Psoas muscle (tissue), 8 donors: ENCODE measurements at regions of chr7 and their contacts with region 1.

Region 1: GRCh38 chr7:1532483-1533424 is 2.3 kb downstream of the MAFK start:
- DNase-seq: peak; percentile 81 to 88
- ATAC-seq: peak; percentile 34 to 66 (median 46)
- H3K4me3 ChIP-seq: peak overlapping the region; percentile 78
- H3K27ac ChIP-seq: peak overlapping the region; percentile 99
- H3K4me1 ChIP-seq: peaks cover 43% of the 10 kb centered on the region
- H3K27me3 ChIP-seq: no peaks in the 10 kb centered on the region
- CTCF ChIP-seq: no peak

Region 2: DNA sequence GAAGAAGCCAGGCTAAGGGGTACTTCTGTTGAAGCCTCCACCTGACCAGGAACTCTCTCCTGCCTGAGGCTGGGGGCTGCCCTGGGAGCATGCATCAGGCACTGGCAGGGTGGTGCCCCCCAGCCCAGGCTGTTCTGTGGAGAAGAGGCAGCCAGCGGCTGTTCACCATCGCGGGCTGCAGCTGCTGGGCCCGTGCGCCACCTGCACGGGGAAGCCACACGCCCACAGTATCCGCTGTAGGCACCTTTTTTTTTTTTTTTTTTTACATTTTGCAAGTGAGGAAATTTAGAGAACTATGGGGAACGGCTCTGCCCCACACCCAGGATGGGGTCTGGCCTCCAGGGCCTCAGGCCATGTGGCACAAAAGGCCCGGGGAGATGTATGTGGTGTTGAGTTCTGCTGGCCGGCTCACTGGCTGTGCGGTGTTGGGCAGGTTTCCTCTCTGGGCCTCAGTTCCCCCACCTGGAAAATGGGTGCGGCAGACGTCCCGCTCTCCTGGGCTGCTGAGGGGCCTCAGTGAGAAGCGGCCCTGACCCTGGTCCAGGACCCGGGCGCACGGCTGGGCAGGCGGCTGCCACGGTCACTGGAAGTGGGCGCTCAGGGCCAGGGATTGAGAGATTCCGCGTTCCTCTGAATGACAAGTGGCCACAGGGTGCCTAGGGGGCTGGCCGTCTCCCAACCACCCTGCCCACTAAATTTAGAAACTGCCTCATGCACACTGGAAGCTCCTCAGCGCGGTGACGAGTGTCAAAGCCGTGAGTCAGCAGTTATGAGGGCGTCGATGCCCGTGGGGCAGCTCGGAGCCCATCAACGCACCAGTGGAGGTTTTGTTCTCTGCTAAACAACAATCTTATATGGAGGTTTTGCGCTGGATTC is 19.7 kb before region 1 on chr7:
- intact Hi-C with region 1: loop called in 1 of 2 experiments (anchors 1 kb)
- DNase-seq: peak; percentile 85 to 94
- ATAC-seq: peak; percentile 94 to 96 (median 96)
- H3K4me3 ChIP-seq: peak overlapping the region; percentile 26
- H3K27ac ChIP-seq: peak overlapping the region; percentile 96
- H3K4me1 ChIP-seq: peaks cover 22% of the 10 kb centered on the region
- H3K27me3 ChIP-seq: no peaks in the 10 kb centered on the region
- CTCF ChIP-seq: no peak

Region 3: DNA sequence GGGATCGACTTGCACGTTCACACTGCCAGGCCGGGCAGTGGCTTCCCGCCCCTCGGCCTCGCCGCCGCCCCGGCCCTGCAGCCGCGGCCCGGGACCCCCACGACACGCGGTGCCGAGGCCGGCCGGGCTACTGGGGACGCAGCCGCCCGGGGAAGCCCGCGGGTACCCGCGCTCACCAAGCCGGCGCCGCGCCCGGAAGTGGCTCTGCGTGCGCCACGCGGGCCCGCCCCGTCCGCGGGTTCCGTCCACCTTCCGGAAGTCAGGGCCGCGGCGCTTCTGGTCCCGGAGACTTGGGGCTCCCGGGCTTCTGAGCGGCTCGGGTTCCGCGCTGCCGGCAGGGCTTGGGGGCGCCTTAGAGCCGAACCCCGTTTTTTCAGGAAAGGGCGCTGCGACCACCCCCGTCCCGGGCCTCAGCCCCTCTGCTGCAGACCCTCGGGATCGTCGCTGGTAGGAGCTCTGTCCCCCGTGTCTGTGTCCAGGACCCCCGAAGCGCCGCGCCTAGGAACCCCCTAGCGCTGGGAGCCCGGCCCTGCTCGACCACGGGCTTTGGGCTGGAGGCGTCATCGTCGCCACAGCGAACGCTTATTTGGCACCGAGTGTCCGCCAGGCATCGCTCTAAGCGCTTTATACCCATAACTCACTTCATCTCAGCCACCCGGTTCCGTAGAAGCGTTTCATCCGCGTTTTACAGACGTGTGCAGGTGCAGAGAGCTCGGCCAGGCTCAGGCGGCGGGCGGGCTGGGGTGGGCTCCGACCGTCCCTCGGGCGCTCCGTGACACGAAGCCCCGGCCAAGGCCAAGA is 37.3 kb after region 1 on chr7 and contains the start of gene PSMG3:
- intact Hi-C with region 1: loop called in 1 of 2 experiments (anchors 5 kb)
- DNase-seq: peak; percentile 95
- ATAC-seq: peak; percentile 88 to 95 (median 94)
- H3K4me3 ChIP-seq: peak within 1 kb of the TSS; percentile 94
- H3K27ac ChIP-seq: peak within 1 kb of the TSS; percentile 95
- H3K4me1 ChIP-seq: peaks cover 34% of the 10 kb centered on the region
- H3K27me3 ChIP-seq: no peaks in the 10 kb centered on the region
- CTCF ChIP-seq: peak; percentile 29
- total RNA-seq, gene PSMG3: 11.8 to 18.2 (median 14.6) TPM

Region 4: DNA sequence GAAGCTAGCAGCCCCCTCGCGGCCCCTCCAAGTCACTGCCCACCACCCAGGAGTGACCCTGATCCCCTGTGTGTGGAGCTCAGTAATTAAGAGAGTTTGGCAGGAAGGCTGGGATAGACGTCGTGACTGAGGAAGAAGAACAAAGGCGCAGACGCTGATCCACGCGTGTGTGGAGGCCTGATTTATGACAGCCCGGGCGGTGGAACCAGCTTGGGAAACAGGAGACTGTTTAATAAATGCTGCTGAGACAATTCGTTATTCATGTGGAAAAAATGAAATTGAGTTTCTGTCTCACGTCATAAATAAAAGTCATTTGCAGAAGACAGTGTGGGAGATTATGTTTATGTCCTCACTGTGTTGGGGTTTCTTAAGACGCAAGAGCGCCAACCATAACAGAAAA is 268.1 kb after region 1 on chr7:
- intact Hi-C with region 1: no loop called
- DNase-seq: no peak
- ATAC-seq: no peak
- H3K4me3 ChIP-seq: no peak overlapping the region
- H3K27ac ChIP-seq: no peak overlapping the region
- H3K4me1 ChIP-seq: no peaks in the 10 kb centered on the region
- H3K27me3 ChIP-seq: peaks cover 0 to 9% (median under 1%) of the 10 kb centered on the region in 3 donors
- CTCF ChIP-seq: no peak